GM12878 (cell line): ENCODE measurements at regions of chr5 and their contacts with region 1.

Region 1: GRCh38 chr5:133423618-133424282 is 188.6 kb downstream of the FSTL4 start:
- DNase-seq: peak; percentile 16
- ATAC-seq: peak; percentile 92
- H3K4me3 ChIP-seq: no peak overlapping the region
- H3K27ac ChIP-seq: no peak overlapping the region
- H3K4me1 ChIP-seq: 0 out of 2 replicates have a peak, but pooled peaks cover 4% of the 10 kb centered on the region
- H3K27me3 ChIP-seq: peaks cover 3% of the 10 kb centered on the region in 2 experiments; a peak in 1 of 4 replicates
- CTCF ChIP-seq: peak; percentile 87 to 93 (median 91)
- EP300 ChIP-seq: no peak
- POLR2A ChIP-seq: no peak
- RAD21 ChIP-seq: peak; percentile 65

Region 2: GRCh38 chr5:132466433-132467286 is 957.1 kb before region 1 on chr5:
- CTCF ChIA-PET with region 1: no interaction called
- POLR2A ChIA-PET with region 1: no interaction called
- RAD21 ChIA-PET with region 1: no interaction called
- SMC1A ChIA-PET with region 1: no interaction called
- in situ Hi-C with region 1: no loop called
- intact Hi-C with region 1: no loop called
- DNase-seq: peak; percentile 94
- ATAC-seq: peak; percentile 83
- H3K4me3 ChIP-seq: peak overlapping the region; percentile 42; the same call in 1 of the 2 replicates
- H3K27ac ChIP-seq: peak overlapping the region; percentile 96
- H3K4me1 ChIP-seq: peaks cover 60% of the 10 kb centered on the region
- H3K27me3 ChIP-seq: no peaks in the 10 kb centered on the region
- CTCF ChIP-seq: no peak
- EP300 ChIP-seq: peak; percentile 48 to 78; a peak in 3 of 4 replicates
- POLR2A ChIP-seq: no peak
- RAD21 ChIP-seq: peak; percentile 33

Region 3: GRCh38 chr5:133398646-133399101 is 25.1 kb before region 1 on chr5:
- CTCF ChIA-PET with region 1: interaction called, 16 read pairs
- POLR2A ChIA-PET with region 1: no interaction called
- RAD21 ChIA-PET with region 1: interaction called, 10 read pairs
- SMC1A ChIA-PET with region 1: interaction called, 8 read pairs
- in situ Hi-C with region 1: no loop called
- intact Hi-C with region 1: no loop called
- DNase-seq: peak; percentile 43
- ATAC-seq: peak; percentile 92
- H3K4me3 ChIP-seq: no peak overlapping the region
- H3K27ac ChIP-seq: no peak overlapping the region
- H3K4me1 ChIP-seq: peaks cover 31% of the 10 kb centered on the region
- H3K27me3 ChIP-seq: no peaks in the 10 kb centered on the region
- CTCF ChIP-seq: no peak
- EP300 ChIP-seq: peak in 1 of 2 experiments; percentile 55; a peak in 1 of 4 replicates
- POLR2A ChIP-seq: no peak
- RAD21 ChIP-seq: no peak

Region 4: DNA sequence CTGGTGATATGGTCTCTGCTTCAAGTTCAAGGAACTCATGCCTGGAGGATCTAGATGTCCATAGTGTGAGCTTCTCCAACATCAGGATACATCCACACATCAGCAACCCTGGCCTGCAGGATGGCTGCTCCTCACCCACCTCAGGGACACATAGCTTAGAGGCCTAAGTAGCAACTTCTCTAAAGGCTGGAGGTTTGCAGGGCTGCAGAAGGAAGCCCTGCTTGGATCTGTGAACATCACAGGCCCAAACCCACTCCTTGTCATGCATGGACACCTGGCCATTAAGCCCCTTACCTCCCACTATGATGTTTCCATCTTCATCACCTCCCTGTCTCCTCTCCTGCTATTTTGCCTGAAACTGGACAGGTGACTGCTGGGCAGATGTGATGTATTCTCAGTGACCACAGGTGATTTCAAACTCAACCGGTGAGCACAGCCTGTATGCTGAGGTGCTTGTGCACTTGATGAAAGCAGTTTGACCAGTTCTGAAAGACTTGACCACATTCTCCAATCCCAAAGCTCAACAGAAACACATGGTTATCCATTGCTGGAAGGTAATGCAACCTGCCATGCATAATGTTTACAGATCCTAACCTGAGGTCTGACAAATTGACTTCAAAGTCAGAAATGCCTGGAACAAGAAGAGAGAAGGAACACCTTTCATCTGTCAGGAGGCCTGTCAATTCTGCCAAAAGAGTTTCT is 16.6 kb before region 1 on chr5:
- CTCF ChIA-PET with region 1: interaction called, 10 read pairs
- POLR2A ChIA-PET with region 1: no interaction called
- RAD21 ChIA-PET with region 1: interaction called, 4 read pairs
- SMC1A ChIA-PET with region 1: no interaction called
- in situ Hi-C with region 1: no loop called
- intact Hi-C with region 1: no loop called
- DNase-seq: no peak
- ATAC-seq: no peak
- H3K4me3 ChIP-seq: no peak overlapping the region
- H3K27ac ChIP-seq: no peak overlapping the region
- H3K4me1 ChIP-seq: no peaks in the 10 kb centered on the region
- H3K27me3 ChIP-seq: no peaks in the 10 kb centered on the region
- CTCF ChIP-seq: no peak
- EP300 ChIP-seq: no peak
- POLR2A ChIP-seq: no peak
- RAD21 ChIP-seq: no peak

Region 5: DNA sequence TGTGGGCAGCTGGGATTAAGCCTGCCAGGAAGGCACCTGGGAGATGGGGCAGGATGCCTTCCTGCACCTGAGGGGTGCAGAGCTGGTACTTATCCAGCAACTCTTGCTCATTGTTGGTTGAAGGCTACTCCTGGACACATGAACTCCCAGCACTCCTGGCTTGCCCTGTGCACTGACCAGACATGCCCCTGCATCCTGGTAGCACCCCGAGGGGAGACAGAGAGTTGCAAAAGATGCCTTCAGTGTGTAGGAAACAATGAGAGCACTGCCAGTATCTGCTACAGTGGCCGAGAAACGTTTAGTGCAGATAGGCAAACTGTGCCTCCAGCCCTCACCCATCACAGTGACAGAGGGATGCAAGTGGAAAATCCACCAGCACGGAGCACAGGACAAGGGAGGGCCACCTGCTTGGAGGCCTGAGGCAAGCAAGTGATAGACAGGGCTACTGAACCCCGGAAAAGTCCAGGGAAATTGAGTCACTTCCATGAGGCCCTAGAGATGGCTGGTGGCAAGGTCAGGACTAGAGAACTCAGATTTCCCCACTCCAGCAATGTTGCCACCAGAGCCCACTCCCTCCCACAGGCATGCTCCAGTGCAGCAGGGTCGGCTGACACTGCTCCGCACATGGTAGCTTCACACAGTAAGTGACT is 17.5 kb after region 1 on chr5:
- CTCF ChIA-PET with region 1: interaction called, 19 read pairs
- POLR2A ChIA-PET with region 1: no interaction called
- RAD21 ChIA-PET with region 1: interaction called, 4 read pairs
- SMC1A ChIA-PET with region 1: interaction called, 3 read pairs
- in situ Hi-C with region 1: no loop called
- intact Hi-C with region 1: no loop called
- DNase-seq: no peak
- ATAC-seq: no peak
- H3K4me3 ChIP-seq: no peak overlapping the region
- H3K27ac ChIP-seq: no peak overlapping the region
- H3K4me1 ChIP-seq: no peaks in the 10 kb centered on the region
- H3K27me3 ChIP-seq: peaks cover 0 to 1% of the 10 kb centered on the region in 2 experiments; a peak in 3 of 4 replicates
- CTCF ChIP-seq: no peak
- EP300 ChIP-seq: no peak
- POLR2A ChIP-seq: no peak
- RAD21 ChIP-seq: no peak

Region 6: DNA sequence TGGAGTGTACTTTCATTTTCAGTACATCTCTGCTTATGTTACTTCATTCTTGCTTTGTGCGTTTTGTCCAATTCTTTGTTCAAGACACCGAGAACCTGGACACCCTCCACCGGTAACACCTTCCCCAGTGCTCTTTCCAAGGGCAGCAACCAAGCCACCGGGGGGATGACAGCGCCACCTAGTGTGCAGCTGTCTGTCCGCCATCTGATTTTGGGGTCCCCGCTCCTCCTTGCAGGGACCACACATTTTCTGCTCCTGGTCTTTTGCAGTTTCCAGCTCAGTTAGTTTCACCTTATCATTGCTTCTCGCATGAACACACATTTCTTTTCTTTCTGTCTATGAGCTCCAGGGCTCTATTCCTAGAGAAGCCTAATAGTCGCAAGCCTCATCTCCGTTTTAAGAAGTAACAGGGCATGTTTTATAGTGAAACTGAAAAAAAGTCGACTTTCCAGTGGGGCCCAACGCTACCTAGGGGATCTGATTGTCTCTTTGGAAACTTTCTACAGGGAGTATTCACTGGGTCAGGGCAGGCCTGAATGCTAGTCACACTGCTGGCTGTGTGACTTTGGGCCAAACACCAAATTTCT is 36.5 kb after region 1 on chr5:
- CTCF ChIA-PET with region 1: interaction called, 28 read pairs
- POLR2A ChIA-PET with region 1: no interaction called
- RAD21 ChIA-PET with region 1: interaction called, 3 read pairs
- SMC1A ChIA-PET with region 1: interaction called, 13 read pairs
- in situ Hi-C with region 1: no loop called
- intact Hi-C with region 1: loop called (anchors 2 kb)
- DNase-seq: no peak
- ATAC-seq: peak; percentile 80
- H3K4me3 ChIP-seq: no peak overlapping the region
- H3K27ac ChIP-seq: no peak overlapping the region
- H3K4me1 ChIP-seq: no peaks in the 10 kb centered on the region
- H3K27me3 ChIP-seq: no peaks in the 10 kb centered on the region; a peak in 2 of 4 replicates
- CTCF ChIP-seq: peak; percentile 70 to 79 (median 76)
- EP300 ChIP-seq: no peak
- POLR2A ChIP-seq: no peak
- RAD21 ChIP-seq: peak; percentile 78

Region 7: DNA sequence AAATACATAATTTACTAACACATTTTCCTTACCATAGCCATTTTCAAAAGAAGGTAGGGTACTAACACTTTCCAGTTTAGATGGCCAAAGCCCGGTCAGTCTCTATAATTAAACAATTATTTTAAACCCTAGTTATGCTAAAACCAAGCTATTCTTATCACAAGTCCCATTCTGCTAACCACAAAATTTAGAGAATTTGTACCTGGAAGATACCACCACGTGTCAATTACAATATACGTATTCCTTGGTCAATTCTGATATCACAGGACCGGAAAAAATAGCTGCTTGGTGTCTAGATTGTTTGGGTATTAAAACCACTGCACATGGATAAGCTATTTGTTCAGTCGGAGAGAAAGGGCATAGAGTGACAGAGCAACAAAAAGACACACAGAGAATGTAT is 771.9 kb after region 1 on chr5:
- CTCF ChIA-PET with region 1: no interaction called
- POLR2A ChIA-PET with region 1: no interaction called
- RAD21 ChIA-PET with region 1: no interaction called
- SMC1A ChIA-PET with region 1: no interaction called
- in situ Hi-C with region 1: no loop called
- intact Hi-C with region 1: no loop called
- DNase-seq: no peak
- ATAC-seq: no peak
- H3K4me3 ChIP-seq: no peak overlapping the region
- H3K27ac ChIP-seq: no peak overlapping the region
- H3K4me1 ChIP-seq: no peaks in the 10 kb centered on the region
- H3K27me3 ChIP-seq: no peaks in the 10 kb centered on the region
- CTCF ChIP-seq: no peak
- EP300 ChIP-seq: no peak
- POLR2A ChIP-seq: no peak
- RAD21 ChIP-seq: no peak